ENCODE measurements at regions of chr20 and their contacts with region 1.

Region 1: GRCh38 chr20:1437235-1437904 is 29.3 kb downstream of the NSFL1C start:
- DNase-seq: peak; percentile 84
- ATAC-seq: peak; percentile 29
- H3K4me3 Mint-ChIP-seq: no peak overlapping the region
- H3K27ac Mint-ChIP-seq: no peak overlapping the region
- H3K4me1 Mint-ChIP-seq: peaks cover 35% of the 10 kb centered on the region
- H3K27me3 Mint-ChIP-seq: no peaks in the 10 kb centered on the region
- CTCF ChIP-seq: peak; percentile 89

Region 2: DNA sequence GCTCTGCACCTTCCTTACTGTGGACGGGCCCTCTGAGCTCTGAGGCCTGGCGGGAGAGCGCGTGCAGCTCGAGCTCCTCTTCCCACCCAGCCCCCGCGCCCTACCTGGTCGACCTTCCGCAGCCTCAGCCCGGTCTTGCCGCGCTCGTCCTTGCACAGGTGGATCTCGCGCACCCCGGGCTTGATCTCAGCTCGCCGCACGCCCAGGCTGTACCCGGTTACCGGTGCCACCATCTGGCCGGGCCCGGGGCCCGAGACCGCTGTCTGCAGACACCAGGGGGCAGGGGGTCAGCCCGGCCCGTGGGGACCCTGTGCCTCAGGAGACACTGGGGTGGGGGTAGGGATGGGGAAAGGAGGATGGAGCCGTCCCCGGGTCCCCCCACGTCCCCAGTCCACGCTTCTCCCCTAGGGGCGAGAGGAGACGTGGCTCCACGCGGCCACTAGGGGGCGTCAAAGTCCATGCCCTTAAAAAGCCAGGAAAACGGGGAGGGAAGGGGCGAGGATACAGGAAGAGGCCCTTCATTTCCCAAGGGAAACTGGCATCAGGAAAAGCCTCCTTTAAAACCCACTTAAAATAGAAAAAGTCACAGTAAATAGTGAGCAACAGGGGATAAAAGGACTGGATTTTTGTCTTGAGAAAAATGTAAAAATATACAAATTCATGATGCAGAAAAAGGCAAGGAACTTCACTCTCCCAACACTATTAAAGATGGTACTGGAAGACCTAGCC is 124.0 kb before region 1 on chr20:
- CTCF ChIA-PET with region 1: interaction called, 26 read pairs
- POLR2A ChIA-PET with region 1: no interaction called
- intact Hi-C with region 1: loop called (anchors 1 kb)
- DNase-seq: peak; percentile 65
- ATAC-seq: peak; percentile 81
- H3K4me3 Mint-ChIP-seq: no peak overlapping the region
- H3K27ac Mint-ChIP-seq: no peak overlapping the region
- H3K4me1 Mint-ChIP-seq: peaks cover 13% of the 10 kb centered on the region
- H3K27me3 Mint-ChIP-seq: peaks cover 2% of the 10 kb centered on the region
- CTCF ChIP-seq: peak; percentile 100

Region 3: DNA sequence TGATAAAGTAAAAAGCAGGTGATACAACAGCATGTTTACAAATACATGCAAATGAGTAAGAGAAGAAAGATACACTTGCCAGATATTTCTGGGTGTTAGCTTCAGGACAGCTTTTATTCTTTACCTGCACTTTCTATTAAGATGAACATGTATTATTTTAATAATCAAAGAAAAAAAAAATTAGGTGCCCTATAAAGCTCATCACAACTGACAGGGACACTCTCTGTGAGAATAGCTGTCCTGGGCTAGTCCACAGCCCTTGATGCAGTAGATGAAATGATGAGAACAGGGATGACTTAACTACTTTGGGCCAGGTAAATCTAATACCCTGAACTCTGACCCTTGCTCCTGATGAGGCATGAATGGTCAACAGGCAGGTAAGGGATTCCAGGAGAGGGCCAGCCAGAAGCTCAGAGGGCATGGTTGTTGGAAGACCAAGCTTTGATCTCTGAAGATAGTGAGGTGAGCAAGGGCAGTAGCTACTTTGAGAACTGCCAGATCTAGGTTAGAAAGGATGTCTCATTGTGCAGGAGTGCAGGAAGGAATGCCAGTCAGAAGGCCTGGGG is 13.6 kb after region 1 on chr20:
- CTCF ChIA-PET with region 1: interaction called, 36 read pairs
- POLR2A ChIA-PET with region 1: interaction called, 3 read pairs
- intact Hi-C with region 1: no loop called
- DNase-seq: no peak
- ATAC-seq: no peak
- H3K4me3 Mint-ChIP-seq: no peak overlapping the region
- H3K27ac Mint-ChIP-seq: no peak overlapping the region
- H3K4me1 Mint-ChIP-seq: peaks cover under 1% of the 10 kb centered on the region
- H3K27me3 Mint-ChIP-seq: no peaks in the 10 kb centered on the region
- CTCF ChIP-seq: no peak

Region 4: DNA sequence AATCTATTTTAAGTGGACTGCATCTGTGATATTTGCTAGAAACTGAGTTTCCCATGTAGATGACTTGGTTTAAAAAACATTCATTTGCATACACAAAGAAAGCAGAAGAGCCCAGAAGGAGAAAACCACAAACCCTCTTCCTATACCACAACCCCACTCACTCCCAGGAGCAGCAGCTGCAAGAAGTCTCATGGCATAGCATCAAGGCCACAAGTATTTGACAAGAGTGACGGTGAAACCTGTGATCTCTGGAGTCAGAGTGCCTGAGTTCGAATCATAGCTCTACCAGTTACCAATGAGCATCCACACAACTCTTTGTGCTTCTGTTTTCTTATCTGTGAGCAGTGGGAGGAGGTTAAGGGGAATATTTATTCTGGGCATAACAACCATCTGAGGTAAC is 265.0 kb after region 1 on chr20:
- CTCF ChIA-PET with region 1: no interaction called
- POLR2A ChIA-PET with region 1: no interaction called
- intact Hi-C with region 1: no loop called
- DNase-seq: no peak
- ATAC-seq: no peak
- H3K4me3 Mint-ChIP-seq: no peak overlapping the region
- H3K27ac Mint-ChIP-seq: no peak overlapping the region
- H3K4me1 Mint-ChIP-seq: peaks cover 6% of the 10 kb centered on the region
- H3K27me3 Mint-ChIP-seq: no peaks in the 10 kb centered on the region
- CTCF ChIP-seq: no peak

Measured in activated CD8-positive, alpha-beta T cell treated with anti-CD3 and anti-CD28 coated beads for 36 hours (primary cell).